ENCODE measurements at regions of chr5 and their contacts with region 1.

Region 1: DNA sequence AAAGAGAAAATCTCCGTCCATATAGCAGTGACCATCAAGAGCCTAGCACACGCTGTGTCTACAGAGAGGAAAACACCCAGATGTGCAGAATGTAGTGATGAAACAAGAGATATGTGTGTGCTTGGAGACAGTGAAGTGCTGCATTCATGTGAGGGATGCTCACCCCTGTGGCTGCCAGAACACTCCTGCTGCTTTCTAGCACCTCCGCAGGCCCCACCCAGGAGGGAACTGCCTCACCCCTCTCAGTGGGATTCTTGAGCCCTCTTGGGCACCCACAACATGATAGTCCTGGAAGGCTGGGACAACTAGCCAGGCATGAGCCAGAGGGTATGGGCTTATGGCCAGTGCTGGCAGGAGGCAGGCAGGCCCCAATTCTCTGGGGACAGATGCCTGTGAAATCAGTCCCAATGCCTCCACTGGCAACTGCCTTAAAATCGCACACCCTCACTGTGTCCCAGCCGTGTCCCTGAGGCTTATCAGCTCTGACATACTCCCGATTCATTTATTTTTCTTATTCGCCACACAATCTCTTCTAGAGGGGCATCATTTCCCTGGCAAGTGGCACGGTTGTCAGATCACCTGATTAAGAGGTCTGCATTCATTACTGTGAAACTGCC is 73.2 kb upstream of the FSTL4 start:
- DNase-seq: no peak
- ATAC-seq: no peak
- H3K4me3 ChIP-seq: no peak overlapping the region
- H3K27ac ChIP-seq: peak overlapping the region; percentile 86
- H3K4me1 ChIP-seq: peaks cover 46% of the 10 kb centered on the region
- H3K27me3 ChIP-seq: no peaks in the 10 kb centered on the region
- CTCF ChIP-seq: no peak

Region 2: GRCh38 chr5:133065500-133065899 is 620.0 kb before region 1 on chr5:
- CTCF ChIA-PET with region 1: no interaction called
- POLR2A ChIA-PET with region 1: no interaction called
- intact Hi-C with region 1: no loop called
- DNase-seq: peak; percentile 42
- ATAC-seq: peak; percentile 40
- H3K4me3 ChIP-seq: no peak overlapping the region
- H3K27ac ChIP-seq: no peak overlapping the region; the same call in 1 of the 2 replicates
- H3K4me1 ChIP-seq: peaks cover 13% of the 10 kb centered on the region
- H3K27me3 ChIP-seq: no peaks in the 10 kb centered on the region
- CTCF ChIP-seq: no peak

Region 3: GRCh38 chr5:133754575-133755169 is 69.2 kb after region 1 on chr5:
- CTCF ChIA-PET with region 1: no interaction called
- POLR2A ChIA-PET with region 1: no interaction called
- intact Hi-C with region 1: loop called (anchors 2 kb)
- DNase-seq: peak; percentile 36
- ATAC-seq: no peak
- H3K4me3 ChIP-seq: no peak overlapping the region
- H3K27ac ChIP-seq: peak overlapping the region; percentile 61
- H3K4me1 ChIP-seq: peaks cover 17% of the 10 kb centered on the region
- H3K27me3 ChIP-seq: no peaks in the 10 kb centered on the region
- CTCF ChIP-seq: peak; percentile 56

Region 4: GRCh38 chr5:133801955-133802751 is 116.6 kb after region 1 on chr5:
- CTCF ChIA-PET with region 1: no interaction called
- POLR2A ChIA-PET with region 1: no interaction called
- intact Hi-C with region 1: no loop called
- DNase-seq: peak; percentile 11
- ATAC-seq: peak; percentile 72
- H3K4me3 ChIP-seq: no peak overlapping the region
- H3K27ac ChIP-seq: no peak overlapping the region
- H3K4me1 ChIP-seq: no peaks in the 10 kb centered on the region
- H3K27me3 ChIP-seq: no peaks in the 10 kb centered on the region
- CTCF ChIP-seq: no peak

Measured in PC-3 (cell line).